ENCODE measurements at regions of chr19 and their contacts with region 1.

Region 1: DNA sequence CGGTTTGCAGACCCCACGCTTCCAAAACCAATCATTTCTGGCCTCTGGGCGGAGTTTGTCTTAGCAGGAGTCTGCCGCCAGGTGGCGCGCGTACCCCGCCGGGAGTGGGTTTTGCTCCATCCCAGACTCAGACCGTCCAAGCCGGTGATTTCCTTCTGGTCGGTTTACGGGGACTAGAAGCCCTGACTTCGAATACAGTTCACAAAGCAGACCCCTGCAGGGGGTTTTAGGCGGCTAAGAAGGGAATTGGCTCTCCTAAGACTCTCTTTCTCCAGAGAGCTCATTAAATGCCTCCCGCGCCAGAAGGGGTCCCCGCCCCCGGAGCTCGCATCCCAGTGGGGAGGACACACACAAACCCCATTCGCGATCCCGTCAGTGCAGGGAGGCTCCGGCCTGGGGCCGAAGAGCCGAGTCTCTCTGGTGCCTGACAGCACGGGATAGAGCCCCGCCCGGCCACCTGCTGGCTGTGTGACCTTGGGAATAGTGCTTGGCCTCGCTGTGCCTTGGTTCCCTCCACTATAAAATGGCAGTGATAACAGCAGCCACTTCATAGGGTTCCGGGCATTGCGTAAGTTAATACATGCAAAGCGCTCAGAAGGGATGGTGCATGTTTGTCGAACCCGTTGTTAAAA is 8.6 kb upstream of the NUP62 start:
- DNase-seq: peak; percentile 82
- ATAC-seq: peak; percentile 91
- H3K4me3 ChIP-seq: peak overlapping the region in 2 of 5 experiments; percentile 24 to 28
- H3K4me3 Mint-ChIP-seq: no peak overlapping the region
- H3K27ac ChIP-seq: no peak overlapping the region
- H3K27ac Mint-ChIP-seq: no peak overlapping the region
- H3K4me1 ChIP-seq: peaks cover 5 to 11% of the 10 kb centered on the region in 2 donors
- H3K4me1 Mint-ChIP-seq: peaks cover 7% of the 10 kb centered on the region
- H3K27me3 ChIP-seq: no peaks in the 10 kb centered on the region
- H3K27me3 Mint-ChIP-seq: peaks cover 20% of the 10 kb centered on the region
- CTCF ChIP-seq: peak; percentile 94

Region 2: DNA sequence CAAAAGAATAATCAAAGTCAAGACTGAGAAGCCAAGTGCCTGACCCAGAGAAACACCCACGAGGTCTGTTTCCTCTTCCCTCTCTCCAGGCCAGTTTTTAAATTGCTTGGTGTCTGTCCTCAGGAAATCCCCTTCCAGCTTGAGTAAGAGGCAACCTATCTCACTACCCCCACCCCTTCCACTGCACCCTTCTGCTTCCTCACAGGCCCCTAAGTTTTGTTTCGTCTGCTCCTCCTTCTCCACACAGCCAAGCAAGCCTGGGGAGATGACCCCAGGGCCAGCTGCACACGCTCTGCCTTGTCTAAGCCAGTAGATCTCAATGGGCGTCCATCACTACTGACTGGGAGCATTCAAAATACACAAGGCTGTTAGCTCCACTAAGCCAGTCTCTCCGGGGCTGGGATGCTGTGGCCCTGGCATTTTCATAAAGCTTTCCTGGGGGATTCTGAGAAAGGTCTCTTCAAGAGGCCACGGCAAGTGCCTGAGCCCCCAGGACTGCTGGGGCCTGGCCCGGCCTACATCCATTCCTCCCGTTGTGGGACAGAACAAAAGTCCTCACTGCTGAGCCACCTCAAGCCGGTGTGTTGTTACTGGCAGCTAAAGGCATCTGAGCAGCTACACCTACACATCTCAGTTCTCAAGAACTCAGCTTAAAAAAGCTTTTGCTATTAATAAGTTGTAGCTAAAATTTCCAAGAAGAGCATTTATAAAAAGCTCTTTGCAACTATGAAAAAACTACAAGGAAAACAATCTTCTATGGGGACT is 26.3 kb before region 1 on chr19:
- CTCF ChIA-PET with region 1: interaction called, 11 read pairs
- POLR2A ChIA-PET with region 1: no interaction called
- intact Hi-C with region 1: no loop called
- DNase-seq: peak; percentile 75
- ATAC-seq: peak; percentile 63
- H3K4me3 ChIP-seq: no peak overlapping the region
- H3K4me3 Mint-ChIP-seq: peak overlapping the region; percentile 71
- H3K27ac ChIP-seq: peak overlapping the region; percentile 60 to 82
- H3K27ac Mint-ChIP-seq: peak overlapping the region; percentile 93
- H3K4me1 ChIP-seq: peaks cover 33 to 42% of the 10 kb centered on the region in 2 donors
- H3K4me1 Mint-ChIP-seq: peaks cover 66% of the 10 kb centered on the region
- H3K27me3 ChIP-seq: no peaks in the 10 kb centered on the region
- H3K27me3 Mint-ChIP-seq: no peaks in the 10 kb centered on the region
- CTCF ChIP-seq: no peak

Region 3: GRCh38 chr19:49916842-49917733 is 20.8 kb before region 1 on chr19:
- CTCF ChIA-PET with region 1: interaction called, 13 read pairs
- POLR2A ChIA-PET with region 1: no interaction called
- intact Hi-C with region 1: no loop called
- DNase-seq: no peak
- ATAC-seq: peak; percentile 67
- H3K4me3 ChIP-seq: no peak overlapping the region
- H3K4me3 Mint-ChIP-seq: peak overlapping the region; percentile 88
- H3K27ac ChIP-seq: peak overlapping the region; percentile 34 to 50
- H3K27ac Mint-ChIP-seq: peak overlapping the region; percentile 95
- H3K4me1 ChIP-seq: peaks cover 0 to 6% of the 10 kb centered on the region in 2 donors
- H3K4me1 Mint-ChIP-seq: peaks cover 54% of the 10 kb centered on the region
- H3K27me3 ChIP-seq: no peaks in the 10 kb centered on the region
- H3K27me3 Mint-ChIP-seq: no peaks in the 10 kb centered on the region
- CTCF ChIP-seq: peak; percentile 47

Region 4: DNA sequence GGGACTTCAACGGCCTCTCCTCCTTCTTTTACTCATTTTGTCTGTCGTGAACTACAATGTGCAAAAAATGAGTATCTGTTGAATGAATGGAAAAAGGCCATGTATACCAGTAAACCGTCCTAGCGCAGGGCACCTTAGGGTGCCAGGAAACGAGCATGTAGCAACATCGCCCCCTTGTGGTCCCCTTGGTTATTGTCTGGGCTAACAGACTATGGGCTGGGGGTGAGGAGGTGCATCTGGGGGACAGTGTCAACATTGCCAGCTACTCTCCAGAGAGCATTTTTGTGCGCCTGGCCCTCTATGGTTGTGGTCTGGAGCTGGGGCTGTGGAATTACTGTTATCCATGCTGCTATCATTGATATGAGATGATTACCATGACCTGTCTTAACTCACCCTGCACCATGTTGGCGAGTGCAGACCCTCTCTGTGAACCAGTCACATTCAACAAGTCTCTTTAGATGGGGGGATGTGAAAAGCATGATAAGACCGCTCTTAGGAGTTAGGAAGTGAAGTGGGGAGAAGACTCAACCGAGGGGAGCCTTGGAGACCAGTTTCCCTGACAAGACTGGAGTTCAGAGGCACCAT is 45.9 kb after region 1 on chr19:
- CTCF ChIA-PET with region 1: interaction called, 8 read pairs
- POLR2A ChIA-PET with region 1: no interaction called
- intact Hi-C with region 1: loop called (anchors 1 kb)
- DNase-seq: peak; percentile 77
- ATAC-seq: peak; percentile 69
- H3K4me3 ChIP-seq: no peak overlapping the region
- H3K4me3 Mint-ChIP-seq: no peak overlapping the region
- H3K27ac ChIP-seq: no peak overlapping the region
- H3K27ac Mint-ChIP-seq: peak overlapping the region; percentile 15
- H3K4me1 ChIP-seq: no peaks in the 10 kb centered on the region
- H3K4me1 Mint-ChIP-seq: no peaks in the 10 kb centered on the region
- H3K27me3 ChIP-seq: no peaks in the 10 kb centered on the region
- H3K27me3 Mint-ChIP-seq: no peaks in the 10 kb centered on the region
- CTCF ChIP-seq: peak; percentile 89

Region 5: DNA sequence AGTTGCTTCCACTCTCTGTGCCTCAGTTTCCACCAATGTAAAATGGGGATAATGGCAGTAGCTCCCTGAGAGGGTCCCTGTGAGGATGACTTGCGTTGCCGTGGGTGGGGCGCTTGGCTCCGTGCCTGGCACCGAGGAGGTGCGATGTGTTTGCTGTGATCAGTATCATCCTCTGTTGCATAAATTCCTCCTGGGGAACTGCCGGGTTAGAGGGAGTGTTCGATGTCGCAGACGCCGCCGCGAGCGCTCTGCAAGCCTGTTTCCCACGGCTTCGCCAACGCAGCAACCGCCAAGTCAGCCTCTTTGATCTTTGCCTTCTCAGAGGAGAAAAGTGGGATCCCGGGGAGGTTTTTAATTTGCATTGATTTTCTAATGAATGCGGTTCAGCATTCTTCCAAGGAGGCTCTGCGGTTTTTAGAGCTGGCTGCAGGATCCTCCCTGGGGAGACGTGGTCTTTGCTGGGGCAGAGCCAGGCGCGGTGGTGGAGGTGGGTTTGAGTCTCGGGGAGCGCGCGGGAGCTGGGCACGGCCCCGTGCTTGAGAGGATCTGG is 840.0 kb after region 1 on chr19:
- CTCF ChIA-PET with region 1: no interaction called
- POLR2A ChIA-PET with region 1: no interaction called
- intact Hi-C with region 1: loop called (anchors 5 kb)
- DNase-seq: peak; percentile 15
- ATAC-seq: no peak
- H3K4me3 ChIP-seq: no peak overlapping the region
- H3K4me3 Mint-ChIP-seq: no peak overlapping the region
- H3K27ac ChIP-seq: no peak overlapping the region
- H3K27ac Mint-ChIP-seq: no peak overlapping the region
- H3K4me1 ChIP-seq: peaks cover 0 to 8% of the 10 kb centered on the region in 2 donors
- H3K4me1 Mint-ChIP-seq: peaks cover 4% of the 10 kb centered on the region
- H3K27me3 ChIP-seq: peaks cover 0 to 62% (median 26%) of the 10 kb centered on the region in 4 experiments
- H3K27me3 Mint-ChIP-seq: peaks cover 64% of the 10 kb centered on the region
- CTCF ChIP-seq: no peak

Measured in B cell (primary cell).